ENCODE measurements at regions of chrX and their contacts with region 1.

Region 1: GRCh38 chrX:136028251-136028984 is 43.2 kb downstream of the SLC9A6 start:
- DNase-seq: peak; percentile 21
- ATAC-seq: peak; percentile 69
- H3K4me3 ChIP-seq: no peak overlapping the region
- H3K27ac ChIP-seq: no peak overlapping the region
- H3K4me1 ChIP-seq: no peaks in the 10 kb centered on the region
- H3K27me3 ChIP-seq: no peaks in the 10 kb centered on the region
- CTCF ChIP-seq: peak; percentile 27 to 56 (median 51); a peak in 4 of 6 replicates
- POLR2A ChIP-seq: no peak
- RAD21 ChIP-seq: peak; percentile 63

Region 2: GRCh38 chrX:136162831-136163570 is 134.6 kb after region 1 on chrX:
- CTCF ChIA-PET with region 1: interaction called, 52 read pairs
- POLR2A ChIA-PET with region 1: interaction called, 4 read pairs
- RAD21 ChIA-PET with region 1: interaction called, 3 to 6 read pairs
- intact Hi-C with region 1: loop called (anchors 1 kb)
- DNase-seq: peak; percentile 23
- ATAC-seq: peak; percentile 99
- H3K4me3 ChIP-seq: no peak overlapping the region
- H3K27ac ChIP-seq: no peak overlapping the region
- H3K4me1 ChIP-seq: peaks cover 0 to 16% of the 10 kb centered on the region in 2 experiments; a peak in 1 of 4 replicates
- H3K27me3 ChIP-seq: no peaks in the 10 kb centered on the region
- CTCF ChIP-seq: peak; percentile 39 to 72 (median 54); a peak in 5 of 6 replicates
- POLR2A ChIP-seq: no peak
- RAD21 ChIP-seq: peak; percentile 64

Region 3: DNA sequence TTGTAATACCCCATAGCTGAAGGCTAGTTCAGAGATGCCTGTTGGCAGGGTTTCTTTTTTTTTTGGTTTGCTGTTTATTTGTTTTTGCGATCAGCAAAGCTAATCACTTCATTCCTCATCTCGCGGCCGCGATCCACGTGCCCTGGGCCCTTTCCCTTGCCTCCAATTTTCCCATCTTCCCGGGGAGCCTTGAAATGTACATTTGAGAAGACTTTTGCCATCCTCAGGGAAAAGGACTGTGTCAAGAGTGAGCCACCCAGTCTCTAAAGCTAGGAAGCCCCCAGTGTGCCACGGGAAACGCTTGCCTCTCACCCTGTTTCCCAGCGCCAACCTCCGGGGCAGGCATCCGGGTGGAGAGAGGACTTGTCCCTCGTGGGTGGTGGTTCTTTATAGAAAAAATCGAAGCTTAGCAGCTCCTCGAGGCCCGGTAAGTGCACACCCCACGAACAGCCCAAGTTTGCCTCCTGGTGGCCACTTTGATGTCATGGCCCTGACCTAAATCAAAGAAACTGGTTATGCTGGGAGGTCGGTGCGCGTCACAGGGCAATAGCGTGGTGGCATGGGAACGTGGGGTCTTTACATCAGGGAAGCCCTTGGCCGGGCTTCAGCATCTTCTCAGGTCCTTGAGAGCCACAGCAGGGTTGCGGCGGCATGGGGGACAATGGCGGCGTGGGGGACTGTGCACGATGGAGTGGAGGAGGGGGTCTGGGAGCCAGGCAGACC is 180.8 kb after region 1 on chrX:
- CTCF ChIA-PET with region 1: interaction called, 13 read pairs
- POLR2A ChIA-PET with region 1: no interaction called
- RAD21 ChIA-PET with region 1: interaction called in 1 of 2 experiments, 6 read pairs
- intact Hi-C with region 1: loop called (anchors 2 kb)
- DNase-seq: no peak
- ATAC-seq: peak; percentile 70; the same call in 1 of the 2 replicates
- H3K4me3 ChIP-seq: no peak overlapping the region
- H3K27ac ChIP-seq: no peak overlapping the region
- H3K4me1 ChIP-seq: no peaks in the 10 kb centered on the region
- H3K27me3 ChIP-seq: no peaks in the 10 kb centered on the region
- CTCF ChIP-seq: peak; percentile 13 to 45 (median 36); a peak in 4 of 6 replicates
- POLR2A ChIP-seq: no peak
- RAD21 ChIP-seq: peak; percentile 41; the same call in 1 of the 2 replicates

Region 4: GRCh38 chrX:136251041-136251991 is 222.9 kb after region 1 on chrX and contains the start of gene MAP7D3:
- CTCF ChIA-PET with region 1: no interaction called
- POLR2A ChIA-PET with region 1: no interaction called
- RAD21 ChIA-PET with region 1: no interaction called
- intact Hi-C with region 1: no loop called
- DNase-seq: peak; percentile 16
- ATAC-seq: peak; percentile 85
- H3K4me3 ChIP-seq: peak within 1 kb of the TSS; percentile 58 to 65
- H3K27ac ChIP-seq: peak within 1 kb of the TSS; percentile 60
- H3K4me1 ChIP-seq: peaks cover 3 to 15% of the 10 kb centered on the region in 2 experiments
- H3K27me3 ChIP-seq: no peaks in the 10 kb centered on the region
- CTCF ChIP-seq: no peak
- POLR2A ChIP-seq: peak; percentile 37
- RAD21 ChIP-seq: no peak
- total RNA-seq, gene MAP7D3: 15.0 TPM

Region 5: DNA sequence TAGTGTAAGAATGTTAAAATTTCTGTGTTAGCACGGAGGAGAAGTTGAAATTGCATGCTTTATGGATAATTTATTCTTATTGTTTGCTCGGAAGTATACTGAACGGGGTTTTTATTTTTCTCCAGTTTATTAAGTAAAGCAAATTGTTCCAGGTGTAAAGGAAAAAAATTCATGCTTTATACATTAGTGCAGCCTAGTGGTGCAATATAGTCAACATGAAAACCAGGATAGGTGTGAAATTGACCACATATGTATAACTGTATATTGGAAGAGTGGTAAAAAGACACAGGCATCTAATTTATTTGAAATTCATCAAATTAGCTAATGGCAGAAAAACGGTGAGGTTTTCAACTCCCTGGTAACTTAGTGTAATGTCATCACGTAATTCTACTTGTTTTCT is 460.3 kb after region 1 on chrX:
- CTCF ChIA-PET with region 1: interaction called, 5 read pairs
- POLR2A ChIA-PET with region 1: no interaction called
- RAD21 ChIA-PET with region 1: no interaction called
- intact Hi-C with region 1: loop called (anchors 1 kb)
- DNase-seq: no peak
- ATAC-seq: no peak
- H3K4me3 ChIP-seq: no peak overlapping the region
- H3K27ac ChIP-seq: no peak overlapping the region
- H3K4me1 ChIP-seq: no peaks in the 10 kb centered on the region
- H3K27me3 ChIP-seq: peaks cover 14% of the 10 kb centered on the region; the same call in 1 of the 2 replicates
- CTCF ChIP-seq: peak in 1 of 3 experiments; percentile 16; a peak in 1 of 6 replicates
- POLR2A ChIP-seq: no peak
- RAD21 ChIP-seq: peak; percentile 45

Region 6: DNA sequence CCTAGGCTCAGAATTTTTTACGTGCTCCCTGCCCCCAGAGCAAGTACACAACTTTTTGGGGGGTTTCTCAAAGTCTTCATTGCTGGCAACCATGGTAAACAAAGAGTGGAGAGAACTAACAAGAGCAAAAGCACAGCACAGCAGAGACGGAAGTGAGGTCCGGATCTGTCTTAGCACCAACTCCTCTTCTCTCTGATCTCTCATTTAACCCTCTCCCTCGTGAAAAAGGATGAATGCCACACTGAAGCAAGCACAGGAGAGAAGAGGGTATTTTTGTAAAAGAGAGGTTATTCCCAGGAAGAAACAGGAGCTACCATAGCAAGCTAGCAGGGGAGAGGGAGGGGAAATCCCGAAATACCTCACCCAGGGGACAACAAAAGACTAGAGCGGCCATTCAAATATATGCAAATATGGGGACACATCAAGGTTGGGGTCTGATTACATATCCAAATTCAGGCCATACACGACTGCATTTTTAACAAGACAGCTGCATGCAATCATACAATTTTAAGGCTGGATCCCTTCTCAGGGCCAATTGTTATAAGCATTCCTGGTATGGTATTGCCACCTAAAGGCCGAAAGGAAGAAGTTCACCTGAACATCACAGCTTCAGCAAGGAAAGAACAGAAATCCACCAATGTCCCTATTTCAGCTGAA is 666.1 kb after region 1 on chrX:
- CTCF ChIA-PET with region 1: interaction called, 10 read pairs
- POLR2A ChIA-PET with region 1: no interaction called
- RAD21 ChIA-PET with region 1: no interaction called
- intact Hi-C with region 1: loop called (anchors 5 kb)
- DNase-seq: peak; percentile 8
- ATAC-seq: peak; percentile 69
- H3K4me3 ChIP-seq: no peak overlapping the region
- H3K27ac ChIP-seq: no peak overlapping the region
- H3K4me1 ChIP-seq: no peaks in the 10 kb centered on the region
- H3K27me3 ChIP-seq: no peaks in the 10 kb centered on the region
- CTCF ChIP-seq: peak; percentile 40 to 60 (median 42); a peak in 5 of 6 replicates
- POLR2A ChIP-seq: no peak
- RAD21 ChIP-seq: peak; percentile 75

Region 7: GRCh38 chrX:136780763-136781162 is 752.3 kb after region 1 on chrX and contains the start of gene ARHGEF6:
- CTCF ChIA-PET with region 1: no interaction called
- POLR2A ChIA-PET with region 1: no interaction called
- RAD21 ChIA-PET with region 1: no interaction called
- intact Hi-C with region 1: no loop called
- DNase-seq: no peak
- ATAC-seq: no peak
- H3K4me3 ChIP-seq: no peak within 1 kb of the TSS
- H3K27ac ChIP-seq: no peak within 1 kb of the TSS
- H3K4me1 ChIP-seq: no peaks in the 10 kb centered on the region
- H3K27me3 ChIP-seq: no peaks in the 10 kb centered on the region
- CTCF ChIP-seq: no peak
- POLR2A ChIP-seq: no peak
- RAD21 ChIP-seq: no peak
- total RNA-seq, gene ARHGEF6: 1.9 TPM

Measured in HCT116 (cell line).